ENCODE measurements at regions of chr11 and their contacts with region 1.

Region 1: DNA sequence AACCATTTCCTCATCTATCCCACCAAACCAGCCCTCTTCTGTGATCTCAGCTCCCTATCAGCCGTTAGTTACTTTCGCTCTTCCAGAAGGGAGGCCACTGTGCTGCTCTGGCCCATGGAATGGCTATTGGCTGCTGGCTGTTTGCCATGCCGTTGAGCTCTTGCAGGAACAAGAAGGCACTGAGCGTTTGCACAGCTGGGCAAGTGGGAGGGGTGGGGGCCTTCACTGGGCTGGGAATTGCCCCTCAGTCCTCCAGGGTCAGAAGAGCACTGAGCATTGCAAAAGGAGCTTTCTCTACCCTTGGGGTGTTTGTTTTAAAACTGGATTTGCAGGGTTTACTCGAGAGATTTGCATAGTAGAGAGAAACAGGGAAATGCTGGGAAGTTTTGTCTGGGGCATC is 129.0 kb upstream of the PARVA start:
- DNase-seq: no peak

Region 2: GRCh38 chr11:12122083-12122482 is 126.3 kb before region 1 on chr11:
- intact Hi-C with region 1: loop called in 1 of 2 experiments (anchors 10 kb)
- DNase-seq: no peak

Region 3: GRCh38 chr11:12485328-12485727 is 237.0 kb after region 1 on chr11:
- intact Hi-C with region 1: no loop called
- DNase-seq: no peak